HEK293 (cell line): ENCODE measurements at regions of chr12 and their contacts with region 1.

Region 1: GRCh38 chr12:49580572-49581535 is 12.9 kb upstream of the MCRS1 start:
- H3K4me3 ChIP-seq: no peak overlapping the region
- H3K27ac ChIP-seq: no peak overlapping the region
- H3K4me1 ChIP-seq: no peaks in the 10 kb centered on the region
- CTCF ChIP-seq: peak; percentile 90

Region 2: GRCh38 chr12:49161092-49161795 is 419.6 kb before region 1 on chr12:
- CTCF ChIA-PET with region 1: no interaction called
- POLR2A ChIA-PET with region 1: no interaction called
- H3K4me3 ChIP-seq: no peak overlapping the region
- H3K27ac ChIP-seq: no peak overlapping the region
- H3K4me1 ChIP-seq: no peaks in the 10 kb centered on the region; the same call in 1 of the 2 replicates
- CTCF ChIP-seq: no peak

Region 3: DNA sequence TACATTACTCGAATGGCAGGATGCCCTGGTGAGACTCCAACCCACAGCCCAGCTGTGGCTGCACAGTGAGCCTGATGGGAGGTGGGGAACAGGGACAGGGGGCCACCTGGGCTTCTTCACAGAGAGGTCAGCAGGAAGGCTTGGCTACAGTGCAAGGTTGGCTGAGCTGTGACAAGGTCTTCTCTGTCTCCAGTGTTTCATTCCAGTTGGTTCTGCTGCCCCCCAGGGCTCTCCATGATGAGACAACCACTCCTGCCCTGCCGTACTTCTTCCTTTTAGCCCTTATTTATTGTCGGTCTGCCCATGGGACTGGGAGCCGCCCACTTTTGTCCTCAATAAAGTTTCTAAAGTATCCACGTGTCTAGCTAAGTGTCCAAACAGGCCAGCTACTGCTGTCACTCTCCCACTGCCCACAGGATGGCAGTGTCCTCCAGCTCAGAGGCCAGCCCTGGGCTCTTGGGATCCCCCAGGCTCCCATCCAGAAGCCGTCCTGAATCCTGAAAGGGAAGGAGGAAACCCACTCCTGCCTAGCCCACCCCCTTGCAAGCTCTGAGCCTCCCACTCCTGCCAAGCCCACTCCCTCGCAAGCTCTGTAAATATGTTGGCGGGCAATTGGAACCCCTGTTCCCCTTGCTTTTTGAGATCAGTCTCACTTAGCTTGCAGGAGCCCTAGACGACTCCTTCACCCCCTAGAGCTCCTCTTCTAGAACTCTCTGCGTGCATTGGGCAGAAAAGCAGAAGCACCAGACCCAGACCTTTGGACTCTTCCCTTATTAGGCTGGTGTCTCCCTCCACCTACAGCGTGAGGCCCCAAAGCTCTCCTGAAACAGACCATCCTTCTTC is 249.3 kb before region 1 on chr12:
- CTCF ChIA-PET with region 1: interaction called, 17 read pairs
- POLR2A ChIA-PET with region 1: no interaction called
- H3K4me3 ChIP-seq: no peak overlapping the region
- H3K27ac ChIP-seq: no peak overlapping the region
- H3K4me1 ChIP-seq: peaks cover 5% of the 10 kb centered on the region; the same call in 1 of the 2 replicates
- CTCF ChIP-seq: peak; percentile 88

Region 4: DNA sequence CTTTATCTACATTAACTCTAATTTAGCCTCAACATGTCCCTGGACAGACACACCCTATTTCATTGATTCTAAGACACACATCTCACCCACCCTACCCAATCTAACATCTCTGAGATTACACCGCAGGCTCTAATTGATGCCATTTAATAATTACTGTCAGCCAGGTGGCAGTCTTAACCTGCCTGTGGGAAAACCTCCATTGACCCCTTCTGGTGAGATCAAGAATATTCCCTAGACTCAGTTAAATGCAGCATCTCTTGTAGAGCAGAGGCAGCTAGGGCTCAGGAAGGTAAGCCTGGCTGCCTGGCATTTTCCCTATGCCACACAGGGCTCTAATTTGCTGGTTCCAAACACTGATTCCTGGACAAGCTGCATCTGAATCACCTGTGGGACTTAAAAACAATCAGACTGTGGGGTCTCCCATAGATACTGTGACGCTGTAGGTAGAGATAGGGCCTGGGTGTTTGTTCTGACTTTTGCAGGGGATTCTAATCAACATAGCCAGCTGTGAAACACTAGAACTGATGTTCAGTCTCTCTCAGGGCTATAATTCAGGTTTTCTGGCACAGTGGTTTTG is 27.3 kb before region 1 on chr12:
- CTCF ChIA-PET with region 1: interaction called, 19 read pairs
- POLR2A ChIA-PET with region 1: interaction called, 7 read pairs
- H3K4me3 ChIP-seq: no peak overlapping the region
- H3K27ac ChIP-seq: no peak overlapping the region
- H3K4me1 ChIP-seq: no peaks in the 10 kb centered on the region
- CTCF ChIP-seq: peak; percentile 86

Region 5: DNA sequence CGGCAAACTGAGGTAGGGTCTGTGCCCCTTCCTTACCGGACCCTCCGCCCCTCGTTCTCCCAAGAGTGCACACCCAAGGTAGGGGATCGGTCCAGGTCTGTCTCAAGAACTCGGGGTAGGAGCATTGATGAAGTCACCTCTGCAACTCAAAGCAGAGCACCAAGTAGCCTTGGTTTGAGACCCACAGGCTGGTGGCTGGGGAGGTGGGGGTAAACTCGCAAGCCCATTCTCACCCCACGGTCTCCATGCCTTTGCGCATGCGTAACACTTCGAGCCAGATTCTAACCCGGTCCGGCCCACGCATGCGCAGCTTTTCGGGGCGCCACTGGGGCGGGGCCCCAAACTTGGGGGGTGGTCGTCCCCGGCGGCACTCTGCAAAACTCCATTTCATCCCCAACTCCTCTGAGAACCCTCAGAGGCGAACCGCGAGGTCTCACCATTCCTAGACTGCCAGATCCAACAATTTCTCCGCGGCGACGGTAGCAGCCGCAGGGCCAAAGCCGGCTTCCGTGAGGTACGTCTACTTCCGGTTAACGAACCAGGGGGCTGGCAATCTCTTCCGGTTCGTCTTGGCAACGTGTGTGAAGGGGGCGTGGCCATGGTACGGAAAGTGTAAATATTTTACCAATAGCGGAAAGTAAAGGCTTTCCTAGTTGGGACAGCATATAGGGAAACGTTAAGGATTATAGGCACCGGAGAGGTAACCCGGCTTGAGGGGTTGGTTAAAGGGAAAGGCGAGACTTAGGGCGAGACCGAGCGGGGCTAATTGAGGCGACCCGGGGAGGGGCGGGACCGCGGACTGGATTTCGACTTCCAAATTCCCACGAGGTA is 13.0 kb before region 1 on chr12 and contains the start of gene MCRS1:
- CTCF ChIA-PET with region 1: interaction called, 50 read pairs
- POLR2A ChIA-PET with region 1: no interaction called
- H3K4me3 ChIP-seq: peak within 1 kb of the TSS; percentile 88
- H3K27ac ChIP-seq: peak within 1 kb of the TSS; percentile 69
- H3K4me1 ChIP-seq: no peaks in the 10 kb centered on the region
- CTCF ChIP-seq: no peak

Region 6: DNA sequence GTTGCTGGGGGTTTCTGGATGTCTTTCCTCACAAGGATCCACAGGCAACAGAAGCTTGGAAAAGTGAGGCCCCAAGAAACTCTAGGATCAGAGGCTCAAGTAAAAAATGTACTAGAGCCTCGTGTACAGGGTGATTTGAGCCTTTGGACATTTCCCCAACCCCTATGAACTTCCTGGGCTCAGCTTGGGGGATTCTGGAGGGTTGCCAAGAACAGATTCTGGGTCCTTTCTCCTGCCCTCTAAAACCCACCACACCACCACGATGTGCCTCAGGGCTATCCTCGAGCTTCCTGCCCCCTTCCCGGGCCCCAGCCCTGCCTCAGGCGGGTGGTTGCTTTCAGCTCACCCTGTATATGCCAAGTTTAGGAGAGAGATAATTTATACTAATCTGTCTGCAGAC is 24.0 kb after region 1 on chr12:
- CTCF ChIA-PET with region 1: interaction called, 10 read pairs
- POLR2A ChIA-PET with region 1: no interaction called
- H3K4me3 ChIP-seq: no peak overlapping the region
- H3K27ac ChIP-seq: no peak overlapping the region
- H3K4me1 ChIP-seq: peaks cover 2% of the 10 kb centered on the region; the same call in 1 of the 2 replicates
- CTCF ChIP-seq: no peak

Region 7: DNA sequence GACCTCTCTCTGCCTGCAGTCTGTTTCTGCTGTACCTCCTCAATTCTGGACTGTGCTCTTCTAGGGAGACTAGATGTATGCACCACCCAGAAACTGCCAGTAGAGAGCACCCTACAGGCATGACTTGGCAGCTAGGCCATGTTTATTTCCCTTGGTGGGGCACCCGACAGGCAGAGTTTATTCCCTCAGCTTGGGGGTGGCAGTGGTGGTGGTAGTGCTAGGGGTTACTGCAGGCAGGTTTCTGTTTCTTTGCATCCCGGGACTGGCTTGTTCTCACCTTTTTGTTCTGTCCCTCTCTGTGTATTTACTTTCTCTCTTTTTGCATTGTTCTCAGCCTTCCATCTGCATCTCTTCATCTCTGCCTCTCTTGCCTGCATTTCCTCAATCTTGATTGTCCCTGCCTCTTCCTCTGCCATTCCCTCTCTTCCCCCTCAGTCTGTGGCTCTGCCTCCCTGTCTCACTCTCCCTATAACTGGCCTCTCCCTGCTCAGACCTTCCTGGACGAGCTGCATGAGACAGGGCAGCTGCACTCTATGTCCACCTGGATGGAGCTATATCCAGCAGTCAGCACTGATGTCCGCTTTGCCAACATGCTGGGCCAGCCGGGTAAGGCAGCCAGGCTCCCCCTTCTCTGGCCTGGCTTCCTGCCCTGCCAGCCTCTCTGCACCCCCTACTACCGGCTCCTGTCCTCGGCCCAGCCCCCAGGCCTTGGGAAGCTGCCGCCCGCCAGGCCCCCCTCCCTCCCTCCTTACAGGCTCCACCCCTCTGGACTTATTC is 56.3 kb after region 1 on chr12:
- CTCF ChIA-PET with region 1: interaction called, 11 read pairs
- POLR2A ChIA-PET with region 1: no interaction called
- H3K4me3 ChIP-seq: no peak overlapping the region
- H3K27ac ChIP-seq: no peak overlapping the region
- H3K4me1 ChIP-seq: no peaks in the 10 kb centered on the region; the same call in 1 of the 2 replicates
- CTCF ChIP-seq: peak; percentile 79

Region 8: DNA sequence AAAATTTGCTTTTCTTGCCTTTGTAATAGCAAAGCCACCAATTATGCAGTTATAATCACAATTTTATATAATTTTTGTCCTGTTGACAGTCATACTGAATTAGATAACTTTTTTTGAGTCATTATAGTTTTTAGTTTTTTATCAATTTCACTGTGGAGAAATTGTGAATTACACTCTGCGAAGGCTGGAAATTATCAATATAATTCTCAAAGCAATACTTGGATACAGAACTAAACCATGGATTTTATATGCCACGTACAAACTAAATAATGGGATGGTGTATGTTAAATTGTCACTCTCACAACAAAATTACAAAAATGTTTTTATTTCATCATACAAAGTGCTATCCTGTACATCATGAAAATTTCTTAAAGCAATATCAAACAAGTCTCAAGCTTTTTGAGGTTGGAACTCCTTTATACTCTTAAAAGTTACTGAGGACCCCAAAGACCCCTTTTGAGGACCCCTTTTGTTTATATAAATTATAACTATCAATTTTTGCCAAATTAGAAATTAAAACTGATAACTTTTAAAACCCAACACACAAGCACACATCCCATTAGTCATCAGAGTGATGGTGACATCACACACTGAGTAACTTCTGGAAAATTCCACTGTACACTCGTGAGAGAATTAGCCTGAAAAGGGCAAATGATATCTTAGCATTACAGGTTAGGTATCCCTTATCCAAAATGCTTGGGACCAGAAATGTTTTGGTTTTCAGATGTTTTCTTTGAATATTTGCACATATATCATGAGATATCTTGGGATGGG is 349.8 kb after region 1 on chr12:
- CTCF ChIA-PET with region 1: no interaction called
- POLR2A ChIA-PET with region 1: no interaction called
- H3K4me3 ChIP-seq: no peak overlapping the region
- H3K27ac ChIP-seq: no peak overlapping the region
- H3K4me1 ChIP-seq: no peaks in the 10 kb centered on the region
- CTCF ChIP-seq: no peak